Esophagus muscularis mucosa (tissue), 4 donors: ENCODE measurements at regions of chr5 and their contacts with region 1.

Region 1: GRCh38 chr5:124748687-124749594 is 2.5 kb upstream of the ZNF608 start:
- DNase-seq: peak; percentile 94
- H3K4me3 ChIP-seq: peak overlapping the region; percentile 73 to 77 (median 75)
- H3K27ac ChIP-seq: peak overlapping the region; percentile 91 to 94 (median 92)
- H3K4me1 ChIP-seq: peaks cover 0 to 38% (median 25%) of the 10 kb centered on the region in 4 donors
- H3K27me3 ChIP-seq: no peaks in the 10 kb centered on the region
- CTCF ChIP-seq: no peak
- EP300 ChIP-seq: no peak
- POLR2A ChIP-seq: peak; percentile 18

Region 2: DNA sequence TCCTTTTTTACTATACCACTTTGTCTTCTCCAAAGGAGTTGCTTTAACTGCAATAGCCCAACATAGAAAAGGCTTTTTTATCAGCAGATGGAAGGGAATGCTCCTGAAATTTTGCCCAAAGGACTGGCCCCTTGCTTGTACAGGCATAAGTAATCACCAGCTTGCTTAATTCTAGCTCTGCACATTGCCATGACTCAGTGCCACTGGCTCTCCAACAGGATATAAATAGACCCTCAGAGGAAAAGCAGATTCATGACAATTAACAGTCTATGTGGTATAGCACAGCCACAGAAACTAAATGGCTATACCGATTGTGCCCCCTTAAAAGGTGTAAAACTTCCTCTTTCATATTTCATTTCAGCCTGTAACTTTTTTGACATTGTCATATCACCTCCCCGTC is 229.5 kb before region 1 on chr5:
- intact Hi-C with region 1: loop called (anchors 5 kb)
- DNase-seq: no peak
- H3K4me3 ChIP-seq: no peak overlapping the region
- H3K27ac ChIP-seq: no peak overlapping the region
- H3K4me1 ChIP-seq: peaks cover 9 to 32% (median 26%) of the 10 kb centered on the region in 4 donors
- H3K27me3 ChIP-seq: no peaks in the 10 kb centered on the region
- CTCF ChIP-seq: no peak
- EP300 ChIP-seq: no peak
- POLR2A ChIP-seq: no peak

Region 3: GRCh38 chr5:124583469-124584350 is 165.2 kb before region 1 on chr5:
- intact Hi-C with region 1: no loop called
- DNase-seq: no peak
- H3K4me3 ChIP-seq: no peak overlapping the region
- H3K27ac ChIP-seq: no peak overlapping the region
- H3K4me1 ChIP-seq: peaks cover 0 to 12% (median 0%) of the 10 kb centered on the region in 4 donors
- H3K27me3 ChIP-seq: no peaks in the 10 kb centered on the region
- CTCF ChIP-seq: no peak
- EP300 ChIP-seq: no peak
- POLR2A ChIP-seq: no peak

Region 4: GRCh38 chr5:124651663-124652513 is 97.1 kb before region 1 on chr5:
- intact Hi-C with region 1: loop called (anchors 2 kb)
- DNase-seq: peak; percentile 92
- H3K4me3 ChIP-seq: peak overlapping the region; percentile 55 to 65 (median 62)
- H3K27ac ChIP-seq: peak overlapping the region; percentile 74 to 84 (median 79)
- H3K4me1 ChIP-seq: peaks cover 61 to 92% (median 88%) of the 10 kb centered on the region in 4 donors
- H3K27me3 ChIP-seq: no peaks in the 10 kb centered on the region
- CTCF ChIP-seq: no peak
- EP300 ChIP-seq: no peak
- POLR2A ChIP-seq: no peak

Region 5: DNA sequence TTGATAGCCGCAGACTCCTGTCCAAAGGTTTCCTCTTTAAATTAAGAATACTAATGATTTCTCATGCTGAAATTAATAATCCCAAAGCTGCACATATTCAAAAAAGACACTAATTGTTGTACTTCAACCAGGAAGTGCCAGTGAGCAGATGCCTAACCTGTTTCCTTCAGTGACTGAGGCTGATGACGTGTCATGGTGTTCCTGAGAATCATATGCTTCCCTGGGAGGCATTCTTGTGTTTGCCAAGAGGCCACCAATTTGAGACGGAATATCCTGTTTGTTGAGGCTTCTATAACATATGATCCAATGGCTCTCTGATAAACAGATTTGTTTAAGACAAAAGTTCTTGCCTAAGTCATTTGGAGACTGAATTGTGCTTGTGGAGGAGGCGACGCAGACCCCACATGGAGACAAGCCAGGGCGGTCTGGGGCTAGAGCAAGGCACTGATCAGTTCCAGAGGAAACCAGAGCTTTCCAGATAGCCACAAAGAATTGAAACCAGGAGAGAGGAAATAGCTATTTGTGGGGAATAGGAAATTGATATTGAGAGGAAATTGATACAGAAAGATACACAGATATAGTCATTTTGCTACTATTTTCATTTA is 63.9 kb after region 1 on chr5:
- intact Hi-C with region 1: no loop called
- DNase-seq: no peak
- H3K4me3 ChIP-seq: no peak overlapping the region
- H3K27ac ChIP-seq: no peak overlapping the region
- H3K4me1 ChIP-seq: no peaks in the 10 kb centered on the region
- H3K27me3 ChIP-seq: no peaks in the 10 kb centered on the region
- CTCF ChIP-seq: no peak
- EP300 ChIP-seq: no peak
- POLR2A ChIP-seq: no peak

Region 6: DNA sequence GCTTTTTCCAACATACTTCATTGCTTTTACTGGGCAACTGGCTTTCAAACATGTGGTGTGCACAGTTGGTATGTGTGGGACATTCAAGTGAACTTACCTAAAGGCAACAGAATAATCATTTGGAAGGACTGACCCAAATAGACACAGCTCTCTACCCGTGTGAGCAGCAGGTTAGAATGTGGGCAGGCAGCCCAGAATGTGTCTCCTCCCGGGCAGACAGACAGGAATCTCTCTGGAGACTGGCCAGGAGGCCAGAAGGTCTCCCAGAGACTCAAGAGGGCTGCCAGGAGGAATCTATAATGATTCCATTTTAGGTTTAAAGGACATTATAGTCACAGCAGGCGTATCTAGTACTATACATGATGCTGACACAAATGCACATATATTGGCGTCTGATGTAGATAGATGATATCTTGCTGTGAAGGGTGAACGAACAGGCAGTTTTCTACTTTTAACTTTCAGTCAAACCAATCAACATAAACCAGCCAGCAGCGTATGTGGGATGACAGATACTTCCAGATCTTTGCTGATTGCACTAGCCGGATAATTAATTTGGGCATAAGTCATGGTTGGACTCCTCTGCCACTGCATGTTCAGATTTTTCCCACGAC is 294.9 kb after region 1 on chr5:
- intact Hi-C with region 1: loop called (anchors 10 kb)
- DNase-seq: no peak
- H3K4me3 ChIP-seq: peak overlapping the region in 1 of 4 donors; percentile 5
- H3K27ac ChIP-seq: peak overlapping the region; percentile 3 to 60 (median 34)
- H3K4me1 ChIP-seq: peaks cover 19 to 36% (median 35%) of the 10 kb centered on the region in 4 donors
- H3K27me3 ChIP-seq: no peaks in the 10 kb centered on the region
- CTCF ChIP-seq: no peak
- EP300 ChIP-seq: no peak
- POLR2A ChIP-seq: no peak

Region 7: GRCh38 chr5:125484742-125485641 is 736.1 kb after region 1 on chr5:
- intact Hi-C with region 1: loop called (anchors 10 kb)
- DNase-seq: no peak
- H3K4me3 ChIP-seq: peak overlapping the region in 3 of 4 donors; percentile 22 to 45 (median 25)
- H3K27ac ChIP-seq: peak overlapping the region; percentile 83 to 87 (median 86)
- H3K4me1 ChIP-seq: peaks cover 16 to 49% (median 41%) of the 10 kb centered on the region in 4 donors
- H3K27me3 ChIP-seq: no peaks in the 10 kb centered on the region
- CTCF ChIP-seq: no peak
- EP300 ChIP-seq: peak; percentile 18
- POLR2A ChIP-seq: no peak